HCT116 (cell line): ENCODE measurements at regions of chr12 and their contacts with region 1.

Region 1: DNA sequence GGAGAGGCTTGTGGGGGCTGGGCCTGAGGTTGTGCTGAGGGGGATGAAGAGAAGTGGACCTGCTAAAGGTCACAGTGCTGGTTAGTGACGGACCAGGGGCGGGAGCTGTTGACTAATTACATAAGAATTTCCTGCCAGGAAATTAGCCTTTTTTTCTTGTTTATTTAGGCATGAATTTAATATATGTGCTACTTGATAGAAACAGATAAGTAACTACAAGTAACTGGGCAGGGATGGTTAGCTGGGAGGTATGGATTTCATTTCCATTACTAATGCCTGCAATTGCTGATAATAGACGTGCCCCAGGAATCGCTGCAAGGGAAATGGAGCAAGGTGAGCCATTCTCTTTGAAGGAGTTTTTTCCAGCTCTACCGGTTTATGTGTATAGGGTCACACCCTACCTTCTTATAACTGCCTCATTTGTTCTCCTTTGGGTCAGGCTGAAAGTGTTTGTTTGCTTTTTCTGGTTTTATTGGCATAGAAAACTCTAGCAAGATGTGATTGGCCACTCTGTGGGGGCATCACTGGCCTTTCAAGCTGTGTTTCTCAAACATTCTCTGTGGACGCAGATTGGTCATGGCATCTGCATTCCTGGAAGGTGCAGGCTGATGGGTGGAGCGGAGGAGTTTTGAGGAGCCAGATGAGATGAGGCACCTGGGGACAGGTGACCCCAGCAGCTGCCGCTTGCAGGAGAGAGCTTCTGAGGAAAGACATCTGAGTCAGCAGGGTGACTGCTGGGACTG is 19.1 kb upstream of the GPRC5A start:
- DNase-seq: peak; percentile 87
- ATAC-seq: peak; percentile 71
- H3K4me3 ChIP-seq: peak overlapping the region; percentile 24 to 42
- H3K27ac ChIP-seq: peak overlapping the region; percentile 88
- H3K4me1 ChIP-seq: peaks cover 68 to 91% of the 10 kb centered on the region in 2 experiments
- H3K27me3 ChIP-seq: no peaks in the 10 kb centered on the region
- CTCF ChIP-seq: no peak
- POLR2A ChIP-seq: no peak
- RAD21 ChIP-seq: peak; percentile 24; the same call in 1 of the 2 replicates

Region 2: GRCh38 chr12:12845025-12845787 is 27.1 kb before region 1 on chr12:
- CTCF ChIA-PET with region 1: no interaction called
- POLR2A ChIA-PET with region 1: interaction called, 10 read pairs
- RAD21 ChIA-PET with region 1: interaction called in 1 of 2 experiments, 4 read pairs
- intact Hi-C with region 1: loop called (anchors 2 kb)
- DNase-seq: no peak
- ATAC-seq: no peak
- H3K4me3 ChIP-seq: no peak overlapping the region
- H3K27ac ChIP-seq: peak overlapping the region; percentile 58
- H3K4me1 ChIP-seq: peaks cover 58 to 63% of the 10 kb centered on the region in 2 experiments
- H3K27me3 ChIP-seq: no peaks in the 10 kb centered on the region
- CTCF ChIP-seq: no peak
- POLR2A ChIP-seq: no peak
- RAD21 ChIP-seq: no peak

Region 3: GRCh38 chr12:12899530-12900380 is 27.4 kb after region 1 on chr12:
- CTCF ChIA-PET with region 1: no interaction called
- POLR2A ChIA-PET with region 1: interaction called, 13 read pairs
- RAD21 ChIA-PET with region 1: no interaction called
- intact Hi-C with region 1: no loop called
- DNase-seq: no peak
- ATAC-seq: peak; percentile 9; the same call in 1 of the 2 replicates
- H3K4me3 ChIP-seq: peak overlapping the region in 1 of 2 experiments; percentile 1; a peak in 1 of 4 replicates
- H3K27ac ChIP-seq: peak overlapping the region; percentile 65
- H3K4me1 ChIP-seq: peaks cover 94 to 98% of the 10 kb centered on the region in 2 experiments
- H3K27me3 ChIP-seq: no peaks in the 10 kb centered on the region
- CTCF ChIP-seq: no peak
- POLR2A ChIP-seq: no peak
- RAD21 ChIP-seq: 0 out of 2 replicates have a peak, but pooled peaks have one; percentile 4

Region 4: DNA sequence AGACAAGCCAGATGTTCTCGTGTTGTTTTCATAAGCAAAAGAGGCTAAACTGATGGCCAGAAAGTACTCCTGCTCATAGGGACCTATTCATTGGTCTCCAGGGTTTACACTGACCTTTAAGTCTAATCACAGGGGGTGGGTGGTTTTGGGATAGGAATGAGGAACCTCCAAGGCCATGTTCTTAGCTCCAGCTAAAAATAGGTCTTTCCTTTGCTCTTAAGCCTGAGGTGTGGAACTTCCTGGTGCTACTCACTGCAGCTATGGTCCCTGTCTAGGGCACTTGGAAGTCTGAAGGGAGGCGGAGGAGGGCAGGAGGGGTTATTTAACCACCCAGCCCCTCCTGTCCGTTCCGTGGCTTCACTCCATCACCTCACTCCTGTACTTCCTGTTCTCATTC is 37.7 kb after region 1 on chr12:
- CTCF ChIA-PET with region 1: no interaction called
- POLR2A ChIA-PET with region 1: no interaction called
- RAD21 ChIA-PET with region 1: no interaction called
- intact Hi-C with region 1: no loop called
- DNase-seq: no peak
- ATAC-seq: no peak
- H3K4me3 ChIP-seq: no peak overlapping the region
- H3K27ac ChIP-seq: peak overlapping the region; percentile 4
- H3K4me1 ChIP-seq: peaks cover 18 to 59% of the 10 kb centered on the region in 2 experiments
- H3K27me3 ChIP-seq: no peaks in the 10 kb centered on the region
- CTCF ChIP-seq: no peak
- POLR2A ChIP-seq: no peak
- RAD21 ChIP-seq: no peak